A549 (cell line): ENCODE measurements at regions of chr10 and their contacts with region 1.

Region 1: GRCh38 chr10:31318854-31319601 is at the start of gene ZEB1:
- DNase-seq: peak; percentile 67 to 96
- ATAC-seq: peak; percentile 85 to 87
- H3K4me3 ChIP-seq: peak within 1 kb of the TSS; percentile 88
- H3K27ac ChIP-seq: peak within 1 kb of the TSS; percentile 97 to 98
- H3K4me1 ChIP-seq: peaks cover 16% of the 10 kb centered on the region; the same call in 2 of the 3 replicates
- CTCF ChIP-seq: peak; percentile 18; the same call in 2 of the 3 replicates
- EP300 ChIP-seq: no peak
- POLR2A ChIP-seq: peak; percentile 66
- RAD21 ChIP-seq: peak in 1 of 2 experiments; percentile 49; a peak in 3 of 5 replicates
- polyA plus RNA-seq, gene ZEB1: 22.8 and 23.8 TPM in 2 replicates

Region 2: GRCh38 chr10:31031558-31032257 is 287.3 kb before region 1 on chr10 and contains the start of gene ZNF438:
- CTCF ChIA-PET with region 1: interaction called, 3 read pairs
- POLR2A ChIA-PET with region 1: interaction called, 16 read pairs
- DNase-seq: peak; percentile 73 to 94
- ATAC-seq: peak; percentile 90 to 91
- H3K4me3 ChIP-seq: peak within 1 kb of the TSS; percentile 63
- H3K27ac ChIP-seq: peak within 1 kb of the TSS; percentile 95 to 97
- H3K4me1 ChIP-seq: peaks cover 5% of the 10 kb centered on the region; the same call in 1 of the 3 replicates
- CTCF ChIP-seq: peak; percentile 65
- EP300 ChIP-seq: no peak
- POLR2A ChIP-seq: peak; percentile 62
- RAD21 ChIP-seq: peak; percentile 47 to 76
- polyA plus RNA-seq, gene ZNF438: 4.5 and 6.0 TPM in 2 replicates

Region 3: DNA sequence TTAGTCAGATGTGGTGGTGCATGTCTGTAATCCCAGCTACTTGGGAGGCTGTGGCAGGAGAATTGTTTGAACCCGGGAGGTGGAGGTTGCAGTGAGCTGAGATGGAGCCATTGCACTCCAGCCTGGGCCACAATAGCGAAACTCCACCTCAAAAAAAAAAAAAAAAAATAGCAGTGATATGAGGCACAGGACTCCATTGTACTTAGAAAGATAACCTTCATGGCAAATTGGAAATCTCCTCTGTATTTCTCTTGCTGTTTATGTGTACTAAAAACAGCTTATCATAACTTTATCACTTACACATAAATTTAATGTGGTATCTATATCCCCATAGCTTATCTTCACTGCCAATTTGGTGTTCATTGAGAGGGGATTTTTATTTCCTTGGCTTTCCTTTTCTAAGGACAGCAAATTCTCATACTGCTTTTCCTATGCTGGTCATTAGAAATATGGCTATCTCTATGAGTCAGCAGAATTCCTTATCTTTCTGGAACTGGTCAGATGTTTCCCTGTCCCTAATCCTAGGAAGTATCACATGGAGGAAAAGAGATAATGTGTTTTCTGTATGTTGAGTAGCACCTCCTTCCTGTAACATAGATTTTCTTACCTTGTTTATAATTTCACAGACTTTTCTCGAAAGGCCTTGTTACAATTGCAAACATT is 40.6 kb before region 1 on chr10:
- CTCF ChIA-PET with region 1: no interaction called
- POLR2A ChIA-PET with region 1: no interaction called
- DNase-seq: no peak
- ATAC-seq: no peak
- H3K4me3 ChIP-seq: no peak overlapping the region
- H3K27ac ChIP-seq: no peak overlapping the region
- H3K4me1 ChIP-seq: no peaks in the 10 kb centered on the region
- CTCF ChIP-seq: no peak
- EP300 ChIP-seq: no peak
- POLR2A ChIP-seq: no peak
- RAD21 ChIP-seq: no peak